ENCODE measurements at regions of chrX and their contacts with region 1.

Region 1: GRCh38 chrX:155068165-155068564 is 2.8 kb downstream of the CMC4 start:
- DNase-seq: no peak
- ATAC-seq: no peak
- H3K4me3 ChIP-seq: no peak overlapping the region
- H3K27ac ChIP-seq: no peak overlapping the region
- H3K4me1 ChIP-seq: no peaks in the 10 kb centered on the region
- H3K27me3 ChIP-seq: no peaks in the 10 kb centered on the region

Region 2: DNA sequence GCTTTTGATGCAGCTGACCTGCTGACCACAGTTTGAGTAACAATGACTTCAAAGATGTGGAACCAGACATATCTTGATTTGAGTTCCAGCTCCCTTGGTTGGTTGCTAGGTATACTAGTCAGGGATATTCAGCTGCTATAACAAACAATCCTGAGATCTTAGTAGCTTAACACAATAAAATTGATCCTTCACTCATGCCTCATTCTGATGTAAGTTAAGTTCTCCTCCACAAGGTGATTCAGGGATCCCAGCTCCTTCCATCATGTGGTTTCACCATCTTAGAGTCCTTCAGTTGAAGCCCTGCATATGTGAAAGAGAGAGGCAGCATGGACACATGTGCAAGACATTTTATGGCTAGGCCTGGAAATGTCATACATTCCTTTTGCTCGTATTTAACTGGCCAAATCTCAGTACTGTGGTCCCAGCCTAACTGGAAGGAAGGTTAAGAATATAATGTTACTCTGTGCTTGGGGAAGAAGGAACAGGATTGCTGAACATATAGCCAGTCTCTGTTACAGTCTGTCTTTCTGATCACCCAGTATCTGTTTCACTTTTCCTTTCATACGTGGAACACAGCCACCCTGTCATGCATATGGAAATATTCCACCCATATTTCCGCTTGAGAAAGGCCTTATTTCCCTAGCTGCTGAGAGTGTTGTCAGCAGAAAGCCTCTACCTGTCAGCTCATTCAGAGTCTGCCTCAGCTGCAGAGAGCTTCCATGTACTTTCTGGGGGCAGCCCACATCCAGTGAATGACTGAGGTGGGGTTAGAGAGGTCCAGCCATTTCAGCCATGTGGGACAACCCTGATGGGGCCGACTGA is 240.8 kb before region 1 on chrX:
- intact Hi-C with region 1: no loop called
- DNase-seq: no peak
- ATAC-seq: no peak
- H3K4me3 ChIP-seq: no peak overlapping the region
- H3K27ac ChIP-seq: no peak overlapping the region
- H3K4me1 ChIP-seq: no peaks in the 10 kb centered on the region
- H3K27me3 ChIP-seq: no peaks in the 10 kb centered on the region

Region 3: GRCh38 chrX:154990496-154990895 is 77.7 kb before region 1 on chrX:
- intact Hi-C with region 1: no loop called
- DNase-seq: no peak
- ATAC-seq: no peak
- H3K4me3 ChIP-seq: no peak overlapping the region
- H3K27ac ChIP-seq: no peak overlapping the region
- H3K4me1 ChIP-seq: no peaks in the 10 kb centered on the region
- H3K27me3 ChIP-seq: no peaks in the 10 kb centered on the region

Region 4: GRCh38 chrX:155031657-155032056 is 36.5 kb before region 1 on chrX:
- intact Hi-C with region 1: loop called in 1 of 2 experiments (anchors 5 kb)
- DNase-seq: no peak
- ATAC-seq: no peak
- H3K4me3 ChIP-seq: no peak overlapping the region
- H3K27ac ChIP-seq: no peak overlapping the region
- H3K4me1 ChIP-seq: no peaks in the 10 kb centered on the region
- H3K27me3 ChIP-seq: no peaks in the 10 kb centered on the region

Measured in aorta (tissue), 5 donors.